PC-3 (cell line): ENCODE measurements at regions of chr13 and their contacts with region 1.

Region 1: GRCh38 chr13:75687150-75687763 is 51.1 kb downstream of the LMO7 start:
- DNase-seq: peak; percentile 73
- ATAC-seq: peak; percentile 8
- H3K4me3 ChIP-seq: no peak overlapping the region
- H3K27ac ChIP-seq: peak overlapping the region; percentile 100
- H3K4me1 ChIP-seq: peaks cover 45% of the 10 kb centered on the region
- H3K27me3 ChIP-seq: no peaks in the 10 kb centered on the region
- CTCF ChIP-seq: peak; percentile 67

Region 2: DNA sequence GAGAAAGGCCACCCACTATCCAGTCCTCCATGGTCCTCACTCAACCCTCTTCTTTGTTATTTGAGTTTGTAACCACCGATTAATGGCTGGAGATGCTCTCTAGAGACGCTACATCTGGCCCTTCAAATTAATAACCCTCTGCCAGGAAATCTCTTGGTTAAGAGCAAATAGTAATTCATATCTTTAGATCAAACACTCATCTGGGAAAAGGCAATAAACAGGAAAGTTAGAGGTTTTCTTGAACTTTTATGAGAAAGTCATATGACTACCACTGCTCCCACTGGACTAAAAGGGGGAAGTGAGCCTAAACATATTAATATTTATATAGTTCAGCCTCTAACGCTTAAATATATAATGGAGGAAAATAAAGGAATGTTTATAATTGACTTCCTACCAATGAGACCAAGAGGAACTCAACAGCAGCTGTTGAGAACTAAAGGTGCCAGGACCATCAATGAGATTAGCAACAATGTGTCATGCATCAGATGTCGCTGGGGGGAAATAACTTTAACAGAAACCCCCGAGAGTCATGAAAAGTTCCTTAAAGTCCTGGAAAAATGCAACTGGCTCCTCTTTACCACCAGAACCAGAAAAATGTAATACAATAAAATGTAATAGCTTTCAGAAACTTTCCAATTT is 208.0 kb before region 1 on chr13:
- CTCF ChIA-PET with region 1: no interaction called
- POLR2A ChIA-PET with region 1: no interaction called
- intact Hi-C with region 1: no loop called
- DNase-seq: peak; percentile 65
- ATAC-seq: peak; percentile 1; the same call in 1 of the 2 replicates
- H3K4me3 ChIP-seq: peak overlapping the region; percentile 77
- H3K27ac ChIP-seq: peak overlapping the region; percentile 78
- H3K4me1 ChIP-seq: peaks cover 30% of the 10 kb centered on the region
- H3K27me3 ChIP-seq: no peaks in the 10 kb centered on the region
- CTCF ChIP-seq: no peak

Region 3: DNA sequence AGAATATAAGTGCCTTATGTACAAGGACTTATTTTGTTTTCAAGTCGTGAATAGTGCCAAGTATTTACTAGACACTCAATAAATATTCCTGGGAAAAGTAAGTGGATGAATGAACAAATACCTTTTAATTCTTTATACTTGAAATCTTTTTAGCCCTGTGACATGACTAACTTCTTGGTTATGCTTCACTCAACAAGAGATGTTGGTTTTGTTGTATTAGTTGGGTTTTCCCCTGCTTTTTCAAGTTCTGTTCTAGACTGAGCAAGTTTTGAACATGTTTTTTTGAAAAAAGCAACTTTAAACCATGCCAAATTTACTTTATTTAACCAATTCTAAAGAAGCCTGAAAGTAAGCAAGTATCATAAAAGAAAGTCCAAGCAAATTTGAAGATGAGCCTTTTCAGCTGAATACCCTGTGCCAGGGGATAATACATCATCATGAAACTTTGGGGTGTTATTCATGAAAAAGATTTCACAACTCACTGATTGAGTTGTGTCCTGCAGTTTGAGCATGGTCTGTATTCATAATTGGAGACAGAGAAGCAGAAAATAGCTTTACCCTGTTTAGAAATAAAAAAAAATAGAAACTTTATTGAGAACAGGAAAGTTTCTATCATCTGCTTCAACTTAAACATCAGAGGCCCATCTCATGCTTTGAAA is 40.0 kb before region 1 on chr13:
- CTCF ChIA-PET with region 1: no interaction called
- POLR2A ChIA-PET with region 1: no interaction called
- intact Hi-C with region 1: no loop called
- DNase-seq: no peak
- ATAC-seq: no peak
- H3K4me3 ChIP-seq: no peak overlapping the region
- H3K27ac ChIP-seq: no peak overlapping the region
- H3K4me1 ChIP-seq: no peaks in the 10 kb centered on the region
- H3K27me3 ChIP-seq: no peaks in the 10 kb centered on the region
- CTCF ChIP-seq: no peak

Region 4: DNA sequence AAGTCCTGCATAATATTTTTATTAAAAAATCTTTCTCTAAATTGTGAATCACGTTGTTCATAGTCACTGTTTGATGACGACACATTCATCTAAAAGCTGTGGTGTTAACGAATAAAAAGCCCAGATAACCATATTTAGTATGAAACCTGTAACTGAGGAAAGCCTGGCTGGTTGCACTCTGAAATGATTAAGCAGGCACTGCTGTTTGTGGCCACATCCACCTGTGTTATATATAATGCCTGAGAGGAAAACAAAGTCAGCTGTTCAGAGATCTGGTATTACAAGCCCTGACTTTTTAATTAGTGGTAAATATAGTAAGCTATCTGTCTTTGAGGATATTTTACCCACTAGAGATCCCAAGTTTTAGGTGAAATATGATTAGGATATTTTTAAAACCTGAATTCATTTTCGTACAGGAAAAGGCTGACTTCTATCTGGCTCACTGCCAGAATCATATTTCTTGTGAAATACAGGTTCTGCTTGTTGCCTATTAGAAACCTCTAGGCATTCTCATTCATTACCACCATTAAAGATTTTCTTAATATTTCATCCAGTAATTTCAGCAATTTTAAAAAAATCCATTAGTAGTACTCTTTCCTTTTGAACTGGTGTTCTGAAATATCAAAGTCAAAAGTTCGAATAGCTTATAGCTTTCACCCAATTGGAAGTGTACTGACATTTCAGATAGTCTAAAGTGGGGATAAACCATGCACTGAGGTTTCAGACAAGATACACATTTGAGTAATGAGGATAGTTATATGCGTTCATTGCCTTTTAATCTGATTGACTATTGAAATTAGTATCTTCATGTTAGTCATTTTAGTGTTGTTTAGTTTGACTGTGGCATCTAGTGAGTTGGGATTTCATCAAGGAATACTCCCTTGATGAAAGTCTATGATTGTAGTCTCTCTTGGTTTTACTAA is 28.6 kb after region 1 on chr13:
- CTCF ChIA-PET with region 1: no interaction called
- POLR2A ChIA-PET with region 1: interaction called, 4 read pairs
- intact Hi-C with region 1: loop called (anchors 1 kb)
- DNase-seq: peak; percentile 41
- ATAC-seq: peak; percentile 32; the same call in 1 of the 2 replicates
- H3K4me3 ChIP-seq: no peak overlapping the region
- H3K27ac ChIP-seq: peak overlapping the region; percentile 87
- H3K4me1 ChIP-seq: peaks cover 18% of the 10 kb centered on the region
- H3K27me3 ChIP-seq: no peaks in the 10 kb centered on the region
- CTCF ChIP-seq: no peak

Region 5: GRCh38 chr13:75798353-75799255 is 111.3 kb after region 1 on chr13:
- CTCF ChIA-PET with region 1: no interaction called
- POLR2A ChIA-PET with region 1: no interaction called
- intact Hi-C with region 1: loop called (anchors 1 kb)
- DNase-seq: peak; percentile 85
- ATAC-seq: peak; percentile 83
- H3K4me3 ChIP-seq: no peak overlapping the region
- H3K27ac ChIP-seq: peak overlapping the region; percentile 89
- H3K4me1 ChIP-seq: peaks cover 46% of the 10 kb centered on the region
- H3K27me3 ChIP-seq: no peaks in the 10 kb centered on the region
- CTCF ChIP-seq: no peak

Region 6: GRCh38 chr13:76016799-76017400 is 329.6 kb after region 1 on chr13:
- CTCF ChIA-PET with region 1: no interaction called
- POLR2A ChIA-PET with region 1: no interaction called
- intact Hi-C with region 1: loop called (anchors 10 kb)
- DNase-seq: peak; percentile 67
- ATAC-seq: peak; percentile 18; the same call in 1 of the 2 replicates
- H3K4me3 ChIP-seq: no peak overlapping the region
- H3K27ac ChIP-seq: no peak overlapping the region
- H3K4me1 ChIP-seq: peaks cover 47% of the 10 kb centered on the region
- H3K27me3 ChIP-seq: no peaks in the 10 kb centered on the region
- CTCF ChIP-seq: peak; percentile 64